ENCODE measurements at regions of chr1 and their contacts with region 1.

Region 1: GRCh38 chr1:53781654-53782053 is 42.7 kb upstream of the GLIS1 start:
- DNase-seq: no peak
- H3K4me3 ChIP-seq: no peak overlapping the region
- H3K27ac ChIP-seq: no peak overlapping the region
- H3K4me1 ChIP-seq: no peaks in the 10 kb centered on the region
- CTCF ChIP-seq: no peak

Region 2: DNA sequence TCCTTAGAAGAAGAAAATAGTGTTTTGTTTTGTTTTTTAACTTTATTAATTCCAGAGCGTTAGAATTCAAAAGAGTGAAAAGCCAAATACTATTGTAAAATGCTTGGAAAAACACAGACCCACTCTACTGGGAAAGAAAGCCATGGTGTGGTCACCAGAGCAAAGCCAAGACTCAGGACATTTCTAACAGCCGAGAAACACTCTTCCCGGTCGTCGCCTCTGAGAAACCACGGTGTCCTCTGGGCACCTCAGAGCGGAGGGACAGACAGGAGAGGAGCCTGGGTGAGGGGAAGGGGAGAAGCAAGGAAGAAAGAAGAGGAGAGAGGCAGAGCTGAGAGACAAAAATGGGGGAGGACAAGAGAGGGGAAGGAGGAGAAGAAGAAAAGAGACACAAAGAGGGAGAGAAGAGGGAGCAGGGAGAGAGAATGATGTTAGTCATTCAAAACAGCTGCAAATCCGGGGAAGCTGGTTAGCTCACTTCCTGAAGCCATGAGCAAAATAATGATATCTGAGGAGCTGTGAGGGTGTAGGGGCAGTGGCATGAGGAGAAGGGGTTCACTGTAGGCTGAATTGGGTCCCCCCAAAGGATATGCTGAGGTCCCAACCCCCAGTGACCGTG is 380.8 kb before region 1 on chr1:
- CTCF ChIA-PET with region 1: no interaction called
- POLR2A ChIA-PET with region 1: interaction called, 11 read pairs
- intact Hi-C with region 1: no loop called
- DNase-seq: no peak
- H3K4me3 ChIP-seq: no peak overlapping the region
- H3K27ac ChIP-seq: no peak overlapping the region
- H3K4me1 ChIP-seq: no peaks in the 10 kb centered on the region
- CTCF ChIP-seq: no peak

Region 3: DNA sequence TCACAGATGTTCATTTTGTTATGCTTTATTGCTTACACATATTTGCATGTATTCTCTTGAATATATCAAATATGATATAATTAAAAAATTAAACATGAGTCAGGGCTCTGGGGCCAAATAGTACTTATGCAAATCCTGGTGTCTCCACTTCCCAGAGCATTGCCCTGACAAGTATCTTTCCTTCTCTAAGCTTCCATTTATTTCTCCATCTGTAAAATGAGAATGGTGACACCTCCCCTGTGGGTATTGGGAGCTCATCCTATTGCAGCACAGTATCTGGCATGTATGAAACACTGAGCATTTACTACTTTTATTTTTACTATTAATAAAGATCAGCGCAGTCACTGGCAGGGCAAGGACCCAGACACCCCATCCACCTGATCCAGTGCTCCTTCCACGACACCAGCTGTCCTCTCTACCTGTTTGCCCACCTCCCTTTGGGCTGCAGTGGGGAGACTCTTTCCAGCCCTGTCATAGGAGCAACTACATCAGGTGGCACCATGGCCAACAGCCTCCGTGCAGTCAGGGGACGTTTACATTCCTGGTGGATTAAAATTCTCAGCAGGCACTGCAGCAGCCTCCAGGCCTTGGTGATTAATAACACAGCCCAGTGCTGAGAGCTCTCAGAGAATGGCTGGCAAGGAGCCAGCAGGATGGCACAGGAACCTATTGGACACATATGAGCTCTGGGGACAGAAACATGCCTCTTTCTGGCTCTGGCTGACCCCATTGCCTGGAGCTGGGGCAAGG is 209.4 kb before region 1 on chr1:
- CTCF ChIA-PET with region 1: no interaction called
- POLR2A ChIA-PET with region 1: no interaction called
- intact Hi-C with region 1: no loop called
- DNase-seq: no peak
- H3K4me3 ChIP-seq: no peak overlapping the region
- H3K27ac ChIP-seq: no peak overlapping the region
- H3K4me1 ChIP-seq: no peaks in the 10 kb centered on the region
- CTCF ChIP-seq: no peak

Region 4: DNA sequence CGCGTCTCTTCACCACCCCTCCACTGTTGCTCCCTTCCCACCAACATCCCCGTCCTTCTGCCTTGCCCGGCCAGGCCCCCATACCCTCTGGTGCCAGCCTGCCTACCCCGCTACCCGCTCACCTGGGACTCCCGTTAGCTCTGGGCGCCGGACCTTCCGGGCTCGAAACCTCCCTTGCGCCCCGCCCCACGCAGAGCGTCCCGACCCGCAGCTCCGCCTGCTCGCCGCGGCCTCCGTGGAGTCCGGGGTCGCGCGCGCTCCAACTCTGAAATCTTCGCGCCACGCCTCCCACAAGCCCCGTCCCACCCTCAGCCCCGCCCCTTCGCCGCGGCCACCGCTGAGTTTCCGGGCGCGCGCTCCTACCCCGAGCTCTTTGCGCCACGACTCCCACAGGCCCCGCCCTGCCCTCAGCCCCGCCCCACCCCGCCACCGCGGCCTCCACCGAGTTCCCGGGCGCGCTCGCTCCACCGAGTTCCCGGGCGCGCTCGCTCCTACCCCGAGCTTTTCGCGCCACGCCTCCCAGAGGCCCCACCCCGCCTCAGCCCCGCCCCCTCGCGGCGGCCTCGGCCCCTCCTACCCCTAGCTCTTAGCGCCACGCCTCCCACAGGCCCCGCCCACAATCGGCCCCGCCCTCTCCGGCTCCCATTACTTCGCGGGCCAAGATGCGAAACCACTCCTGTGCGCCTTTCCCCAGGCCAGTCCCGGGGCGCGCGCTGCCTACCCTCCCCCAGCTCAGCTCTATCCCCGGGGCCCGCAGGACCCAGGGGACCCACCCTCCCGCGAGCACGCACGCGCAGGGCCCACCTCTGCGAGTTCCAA is 164.0 kb after region 1 on chr1 and contains the start of gene IFT25:
- CTCF ChIA-PET with region 1: no interaction called
- POLR2A ChIA-PET with region 1: no interaction called
- intact Hi-C with region 1: no loop called
- DNase-seq: peak; percentile 92
- H3K4me3 ChIP-seq: peak within 1 kb of the TSS; percentile 71
- H3K27ac ChIP-seq: peak within 1 kb of the TSS; percentile 50
- H3K4me1 ChIP-seq: peaks cover 18% of the 10 kb centered on the region
- CTCF ChIP-seq: no peak
- total RNA-seq, gene IFT25: 57.0 and 61.0 TPM in 2 replicates

Region 5: DNA sequence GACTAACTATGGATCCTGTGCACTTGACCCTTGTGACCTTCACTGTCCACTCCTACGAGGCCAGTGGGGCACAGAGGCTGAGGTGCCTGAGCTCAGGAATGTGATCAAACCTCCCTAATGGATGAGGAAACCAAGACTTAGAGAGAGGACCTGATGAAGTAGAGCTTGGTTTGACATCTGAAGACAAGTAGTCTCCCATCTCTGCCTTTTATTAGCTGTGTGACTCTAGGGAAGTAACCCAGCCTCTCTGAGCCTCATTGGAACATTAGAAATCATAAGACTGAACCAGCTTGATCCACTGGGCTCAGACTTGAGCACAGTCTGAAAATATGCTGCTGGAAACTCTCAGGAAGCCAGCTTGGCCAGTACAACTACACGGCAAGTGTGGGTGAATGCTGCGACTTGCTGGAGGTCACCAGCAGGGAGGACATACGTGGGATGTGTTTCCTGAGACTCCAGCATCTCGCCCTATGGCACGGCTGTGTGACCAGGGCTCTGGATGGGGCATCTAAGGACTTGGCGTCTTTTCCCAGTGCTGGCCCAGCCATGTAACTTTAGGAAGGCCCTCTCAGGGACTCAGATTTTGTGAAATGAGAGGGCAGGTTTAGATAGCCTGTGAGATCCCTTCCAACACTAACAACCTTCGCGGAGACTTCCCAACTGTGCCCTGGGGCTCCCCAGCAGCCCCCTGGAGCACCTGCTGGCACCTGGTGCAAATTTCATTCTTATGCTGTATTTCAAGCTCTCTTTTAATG is 360.7 kb after region 1 on chr1:
- CTCF ChIA-PET with region 1: no interaction called
- POLR2A ChIA-PET with region 1: no interaction called
- intact Hi-C with region 1: no loop called
- DNase-seq: no peak
- H3K4me3 ChIP-seq: no peak overlapping the region
- H3K27ac ChIP-seq: no peak overlapping the region
- H3K4me1 ChIP-seq: no peaks in the 10 kb centered on the region
- CTCF ChIP-seq: no peak

Region 6: DNA sequence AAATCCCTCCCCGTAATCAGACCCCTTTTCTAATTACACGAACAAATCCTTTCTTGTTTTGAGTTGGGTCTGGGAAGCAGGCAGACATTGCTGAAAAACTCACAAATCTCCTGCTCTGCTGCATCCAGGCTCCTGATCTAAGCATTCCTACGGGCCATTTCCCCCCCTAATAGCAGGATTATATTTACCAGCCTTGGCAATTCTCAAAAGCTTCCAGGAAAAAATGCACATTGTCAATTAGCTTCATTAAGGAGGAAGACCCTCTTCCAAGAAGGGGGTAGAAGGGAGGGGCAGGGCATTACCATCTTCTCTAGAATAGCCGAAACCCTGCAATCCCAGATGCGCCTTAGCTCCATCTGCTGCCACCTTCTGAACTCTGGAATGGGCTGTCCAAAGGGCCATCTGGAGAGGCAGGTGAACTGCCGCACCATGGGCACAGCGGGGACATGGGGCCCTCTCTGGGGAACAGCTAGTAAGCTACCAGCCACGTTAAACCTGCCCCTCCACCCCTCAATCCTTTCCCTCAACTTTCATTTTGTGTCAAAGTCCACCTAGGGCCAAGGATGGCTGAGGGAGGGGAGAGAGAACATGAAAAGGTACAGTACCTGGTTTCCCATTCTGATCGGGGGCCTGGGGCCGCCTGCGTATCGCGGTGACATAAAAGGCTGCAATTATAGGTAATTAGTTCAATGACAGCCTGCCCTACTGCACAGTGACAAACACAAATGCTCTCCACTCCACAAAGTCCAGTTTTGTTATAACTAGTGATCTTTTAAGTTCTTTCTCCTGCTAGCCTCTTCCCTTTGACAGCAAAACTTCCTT is 475.1 kb after region 1 on chr1:
- CTCF ChIA-PET with region 1: no interaction called
- POLR2A ChIA-PET with region 1: no interaction called
- intact Hi-C with region 1: no loop called
- DNase-seq: no peak
- H3K4me3 ChIP-seq: no peak overlapping the region
- H3K27ac ChIP-seq: no peak overlapping the region
- H3K4me1 ChIP-seq: no peaks in the 10 kb centered on the region
- CTCF ChIP-seq: no peak

Measured in OCI-LY7 (cell line).